ENCODE measurements at regions of chr3 and their contacts with region 1.

Region 1: GRCh38 chr3:196914866-196915265 is 27.5 kb downstream of the NCBP2 start:
- DNase-seq: no peak

Region 2: DNA sequence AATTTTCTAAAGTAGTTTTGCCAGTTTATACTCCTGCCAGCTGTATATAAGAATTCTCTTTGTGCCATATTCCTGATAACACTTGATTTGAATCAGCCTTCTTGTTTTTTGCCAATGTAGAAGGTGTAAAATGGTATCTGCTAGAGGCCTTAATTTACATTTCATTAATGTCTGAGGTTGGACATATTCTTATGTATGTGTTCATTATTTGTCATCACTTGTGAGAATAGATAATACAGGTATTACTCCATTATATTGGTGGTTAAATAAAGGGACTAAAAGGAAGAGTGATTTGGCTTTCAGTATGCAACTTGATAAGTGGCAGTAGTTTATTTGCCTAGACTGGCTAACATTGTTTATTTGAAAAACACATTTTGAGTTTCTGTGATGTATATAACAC is 149.4 kb before region 1 on chr3:
- CTCF ChIA-PET with region 1: interaction called, 12 read pairs
- POLR2A ChIA-PET with region 1: no interaction called
- DNase-seq: no peak

Region 3: GRCh38 chr3:196894557-196895297 is 20.1 kb before region 1 on chr3:
- CTCF ChIA-PET with region 1: no interaction called
- POLR2A ChIA-PET with region 1: no interaction called
- DNase-seq: no peak

Measured in HEK293T (cell line).